ENCODE measurements at regions of chr4 and their contacts with region 1.

Region 1: GRCh38 chr4:102439236-102439614 is 61.9 kb upstream of the NFKB1 start:
- DNase-seq: no peak
- H3K4me3 ChIP-seq: no peak overlapping the region
- H3K4me1 ChIP-seq: peaks cover 19% of the 10 kb centered on the region
- H3K27me3 ChIP-seq: no peaks in the 10 kb centered on the region

Region 2: GRCh38 chr4:102734591-102735385 is 295.6 kb after region 1 on chr4:
- in situ Hi-C with region 1: no loop called
- DNase-seq: no peak
- H3K4me3 ChIP-seq: no peak overlapping the region
- H3K4me1 ChIP-seq: no peaks in the 10 kb centered on the region
- H3K27me3 ChIP-seq: no peaks in the 10 kb centered on the region

Region 3: GRCh38 chr4:103008875-103009729 is 569.9 kb after region 1 on chr4:
- in situ Hi-C with region 1: loop called (anchors 10 kb)
- DNase-seq: peak; percentile 39 to 77
- H3K4me3 ChIP-seq: no peak overlapping the region
- H3K4me1 ChIP-seq: no peaks in the 10 kb centered on the region; the same call in 1 of the 2 replicates
- H3K27me3 ChIP-seq: peaks cover 5% of the 10 kb centered on the region; the same call in 1 of the 2 replicates